ENCODE measurements at regions of chr17 and their contacts with region 1.

Region 1: GRCh38 chr17:69235338-69235930 is 6.8 kb upstream of the ABCA10 start:
- DNase-seq: peak; percentile 97
- ATAC-seq: peak; percentile 100
- H3K4me3 ChIP-seq: no peak overlapping the region
- H3K27ac ChIP-seq: no peak overlapping the region
- H3K4me1 ChIP-seq: no peaks in the 10 kb centered on the region
- H3K27me3 ChIP-seq: no peaks in the 10 kb centered on the region
- CTCF ChIP-seq: peak; percentile 96

Region 2: GRCh38 chr17:68424942-68425386 is 810.5 kb before region 1 on chr17:
- CTCF ChIA-PET with region 1: no interaction called
- POLR2A ChIA-PET with region 1: interaction called, 16 read pairs
- intact Hi-C with region 1: no loop called
- DNase-seq: peak; percentile 67
- ATAC-seq: peak; percentile 65
- H3K4me3 ChIP-seq: no peak overlapping the region
- H3K27ac ChIP-seq: no peak overlapping the region
- H3K4me1 ChIP-seq: no peaks in the 10 kb centered on the region
- H3K27me3 ChIP-seq: no peaks in the 10 kb centered on the region
- CTCF ChIP-seq: no peak

Region 3: DNA sequence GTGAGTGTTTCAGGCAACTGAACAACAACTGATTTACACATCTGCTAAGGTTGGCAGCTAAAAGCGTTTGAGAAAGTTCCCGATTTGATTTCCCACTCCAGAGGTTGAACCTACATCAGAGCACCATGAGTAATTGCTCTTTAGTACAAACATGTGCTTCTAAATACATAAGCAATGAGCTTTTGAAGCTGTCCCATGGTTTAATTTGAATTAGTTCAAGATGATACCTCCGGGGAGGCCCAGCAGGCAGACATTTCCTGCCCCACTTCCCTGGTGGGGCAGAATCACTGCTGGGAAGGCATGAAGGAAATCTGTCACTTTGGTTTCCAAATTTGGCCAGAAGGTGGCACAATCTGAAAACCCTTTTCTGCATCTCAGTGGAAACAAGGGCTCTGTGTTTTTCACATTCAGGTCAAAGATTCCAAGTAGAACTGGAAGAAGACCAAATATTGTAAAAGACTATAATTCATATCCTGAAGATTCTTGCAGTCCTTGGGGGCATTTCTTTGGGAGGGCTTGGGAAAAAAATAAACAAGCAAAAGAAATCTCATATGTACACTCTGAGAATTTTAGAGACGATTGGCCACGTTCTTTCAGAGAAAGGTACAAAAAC is 458.1 kb before region 1 on chr17:
- CTCF ChIA-PET with region 1: interaction called, 5 read pairs
- POLR2A ChIA-PET with region 1: no interaction called
- intact Hi-C with region 1: loop called (anchors 1 kb)
- DNase-seq: peak; percentile 83
- ATAC-seq: peak; percentile 58
- H3K4me3 ChIP-seq: no peak overlapping the region
- H3K27ac ChIP-seq: no peak overlapping the region
- H3K4me1 ChIP-seq: peaks cover 13% of the 10 kb centered on the region
- H3K27me3 ChIP-seq: peaks cover 5% of the 10 kb centered on the region; the same call in 1 of the 2 replicates
- CTCF ChIP-seq: peak; percentile 93

Region 4: GRCh38 chr17:68909066-68909465 is 326.4 kb before region 1 on chr17:
- CTCF ChIA-PET with region 1: interaction called, 3 read pairs
- POLR2A ChIA-PET with region 1: no interaction called
- intact Hi-C with region 1: loop called (anchors 1 kb)
- DNase-seq: peak; percentile 85
- ATAC-seq: peak; percentile 89
- H3K4me3 ChIP-seq: 0 out of 2 replicates have a peak overlapping the region, but pooled peaks have one; percentile 1
- H3K27ac ChIP-seq: peak overlapping the region; percentile 28
- H3K4me1 ChIP-seq: peaks cover 16% of the 10 kb centered on the region
- H3K27me3 ChIP-seq: peaks cover 6% of the 10 kb centered on the region; the same call in 1 of the 2 replicates
- CTCF ChIP-seq: no peak

Region 5: DNA sequence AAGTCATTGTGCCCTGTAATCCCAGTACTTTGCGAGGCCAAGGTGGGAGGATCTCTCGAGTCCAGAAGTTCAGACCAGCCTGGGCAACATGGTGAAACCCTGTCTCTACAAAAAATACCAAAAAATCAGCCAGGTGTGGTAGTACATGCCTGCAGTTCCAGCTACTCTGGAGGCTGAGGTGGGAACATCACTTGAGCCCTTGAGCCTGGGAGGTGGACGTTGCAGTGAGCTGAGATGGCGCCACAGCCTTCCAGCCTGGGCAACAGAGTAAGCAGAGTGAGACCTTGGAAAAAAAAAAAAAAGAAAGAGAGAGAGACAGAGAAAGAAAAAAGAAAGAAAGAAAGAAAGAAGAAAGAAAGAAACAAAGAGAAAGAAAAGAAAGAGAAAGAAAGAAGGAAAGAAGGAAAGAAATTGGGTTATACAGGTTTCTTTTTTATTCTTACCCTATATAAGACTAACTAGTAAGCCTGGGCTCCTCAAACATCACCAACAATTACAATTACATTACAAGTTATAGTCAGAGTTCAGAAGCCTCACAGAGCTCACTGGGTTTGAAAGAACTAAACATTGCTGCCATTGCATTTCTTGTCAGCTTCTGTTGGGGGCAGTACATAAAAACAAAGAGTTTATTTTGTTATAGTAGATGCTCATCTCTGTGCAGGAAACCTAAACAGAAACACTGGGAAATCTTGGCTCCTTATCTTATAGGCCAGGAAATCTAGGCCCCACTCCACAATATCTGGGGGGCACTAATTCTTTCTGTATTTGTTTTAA is 168.0 kb before region 1 on chr17:
- CTCF ChIA-PET with region 1: interaction called, 3 read pairs
- POLR2A ChIA-PET with region 1: no interaction called
- intact Hi-C with region 1: loop called (anchors 1 kb)
- DNase-seq: peak; percentile 34
- ATAC-seq: peak; percentile 55; the same call in 1 of the 2 replicates
- H3K4me3 ChIP-seq: no peak overlapping the region
- H3K27ac ChIP-seq: no peak overlapping the region
- H3K4me1 ChIP-seq: no peaks in the 10 kb centered on the region
- H3K27me3 ChIP-seq: peaks cover 12% of the 10 kb centered on the region; the same call in 1 of the 2 replicates
- CTCF ChIP-seq: peak; percentile 51; the same call in 1 of the 2 replicates